Activated CD8-positive, alpha-beta memory T cell treated with anti-CD3 and anti-CD28 coated beads, Interleukin-2, amount 10 ng/mL, durations not matched to agents 7 days and 5 days (primary cell): ENCODE measurements at regions of chr9 and their contacts with region 1.

Region 1: GRCh38 chr9:90914868-90915483 is 113.4 kb downstream of the SYK start:
- DNase-seq: peak; percentile 83
- ATAC-seq: peak; percentile 94
- H3K4me3 Mint-ChIP-seq: no peak overlapping the region
- H3K27ac Mint-ChIP-seq: no peak overlapping the region
- H3K4me1 Mint-ChIP-seq: peaks cover 7% of the 10 kb centered on the region
- H3K27me3 Mint-ChIP-seq: no peaks in the 10 kb centered on the region

Region 2: GRCh38 chr9:90929626-90930025 is 14.7 kb after region 1 on chr9:
- CTCF ChIA-PET with region 1: interaction called, 15 read pairs
- DNase-seq: no peak
- ATAC-seq: no peak
- H3K4me3 Mint-ChIP-seq: no peak overlapping the region
- H3K27ac Mint-ChIP-seq: no peak overlapping the region
- H3K4me1 Mint-ChIP-seq: peaks cover 5% of the 10 kb centered on the region
- H3K27me3 Mint-ChIP-seq: peaks cover 20% of the 10 kb centered on the region

Region 3: DNA sequence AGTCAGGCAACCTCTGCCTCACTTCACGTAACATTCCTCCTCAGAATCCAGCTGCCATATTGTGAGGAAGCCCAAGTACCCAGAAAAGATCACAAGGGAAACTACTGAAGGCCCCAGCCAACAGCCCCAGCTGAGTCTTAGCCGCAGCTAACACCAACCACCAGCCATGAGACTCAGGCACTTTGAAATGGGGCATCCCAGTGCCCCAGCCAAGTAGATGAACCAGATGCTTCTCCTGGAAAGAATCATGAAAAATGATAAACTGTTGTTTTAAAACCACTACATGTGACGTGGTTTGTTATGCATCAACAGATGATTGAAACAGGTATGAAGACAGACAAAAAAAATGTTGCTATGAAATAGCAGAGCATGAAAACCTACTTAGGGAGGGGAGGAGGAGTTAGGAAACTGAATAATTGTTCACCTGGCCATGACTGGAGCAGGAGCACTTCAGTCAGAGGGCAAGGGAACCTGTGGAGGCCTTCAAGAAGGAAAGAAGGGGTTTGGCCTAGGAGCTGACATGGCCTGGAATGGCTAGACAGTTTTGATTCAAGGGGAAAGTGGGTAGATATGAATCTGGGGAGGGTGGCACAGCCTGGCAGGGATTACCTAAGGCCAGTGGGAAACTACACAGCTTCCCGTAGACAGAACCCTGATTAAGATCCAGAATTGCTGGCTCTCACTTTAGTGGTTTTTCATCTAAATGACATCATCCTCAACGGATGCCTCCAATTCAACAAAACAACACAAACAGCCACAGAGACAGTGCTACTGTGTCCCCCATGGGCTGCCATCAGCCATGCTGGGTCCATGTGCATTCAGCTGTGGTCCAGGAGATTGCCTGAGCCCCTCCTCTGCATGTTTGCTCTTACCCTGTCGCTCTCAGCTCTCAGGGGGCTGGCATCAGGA is 98.2 kb after region 1 on chr9:
- CTCF ChIA-PET with region 1: interaction called, 19 read pairs
- DNase-seq: peak; percentile 53
- ATAC-seq: peak; percentile 74
- H3K4me3 Mint-ChIP-seq: no peak overlapping the region
- H3K27ac Mint-ChIP-seq: peak overlapping the region; percentile 70
- H3K4me1 Mint-ChIP-seq: peaks cover 22% of the 10 kb centered on the region
- H3K27me3 Mint-ChIP-seq: peaks cover 3% of the 10 kb centered on the region

Region 4: GRCh38 chr9:91164724-91165520 is 249.9 kb after region 1 on chr9:
- CTCF ChIA-PET with region 1: interaction called, 12 read pairs
- DNase-seq: peak; percentile 96
- ATAC-seq: peak; percentile 69
- H3K4me3 Mint-ChIP-seq: peak overlapping the region; percentile 81
- H3K27ac Mint-ChIP-seq: peak overlapping the region; percentile 95
- H3K4me1 Mint-ChIP-seq: peaks cover 66% of the 10 kb centered on the region
- H3K27me3 Mint-ChIP-seq: no peaks in the 10 kb centered on the region

Region 5: DNA sequence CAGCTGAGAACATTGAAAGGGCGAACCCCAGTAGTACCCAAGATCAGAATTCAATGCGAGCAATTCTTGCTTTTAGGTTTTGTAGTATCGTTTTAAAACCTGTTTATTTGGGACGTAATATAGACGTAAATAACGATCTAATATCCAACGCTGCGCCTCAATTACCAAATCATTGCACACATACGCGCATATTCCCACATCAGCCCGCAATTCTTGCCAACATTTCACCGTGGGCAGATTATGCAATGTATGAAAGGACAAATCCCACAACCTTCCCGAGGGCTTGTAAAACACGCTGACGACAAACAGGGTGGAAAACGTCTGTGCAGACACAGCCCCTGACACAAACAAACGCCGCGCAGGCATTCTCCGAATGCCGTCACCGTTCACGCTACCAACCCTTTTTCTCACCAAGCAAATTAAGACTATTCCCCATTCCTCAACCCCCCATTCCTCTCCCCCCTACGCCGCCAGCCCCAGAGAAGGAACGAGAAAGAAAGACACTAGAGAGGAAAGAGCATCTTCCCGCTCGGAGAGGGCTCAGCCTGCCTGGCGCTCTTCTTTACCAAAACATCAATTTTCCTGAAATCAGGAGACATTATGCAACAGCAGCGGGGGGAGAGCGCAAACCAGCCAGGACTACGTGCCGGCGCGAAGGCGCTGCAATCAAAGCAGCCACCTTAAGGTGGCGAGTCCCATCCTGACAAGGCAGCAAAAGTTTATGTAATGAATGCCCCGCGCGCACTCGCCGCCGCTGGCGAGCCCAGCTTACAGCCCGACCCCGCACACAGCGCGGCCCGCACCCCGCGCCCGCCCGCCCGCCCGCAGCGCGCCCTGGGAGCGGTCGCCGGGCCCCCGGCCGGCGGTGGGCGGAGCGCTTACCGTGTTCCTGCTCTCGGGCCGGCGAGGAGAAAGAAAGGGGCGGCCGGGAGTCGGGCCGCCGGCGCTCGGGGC is 508.1 kb after region 1 on chr9:
- CTCF ChIA-PET with region 1: interaction called, 113 read pairs
- DNase-seq: peak; percentile 82
- ATAC-seq: peak; percentile 34
- H3K4me3 Mint-ChIP-seq: peak overlapping the region; percentile 86
- H3K27ac Mint-ChIP-seq: peak overlapping the region; percentile 95
- H3K4me1 Mint-ChIP-seq: peaks cover 57% of the 10 kb centered on the region
- H3K27me3 Mint-ChIP-seq: no peaks in the 10 kb centered on the region

Region 6: GRCh38 chr9:91727316-91727861 is 812.4 kb after region 1 on chr9:
- CTCF ChIA-PET with region 1: interaction called, 16 read pairs
- DNase-seq: peak; percentile 68
- ATAC-seq: peak; percentile 98
- H3K4me3 Mint-ChIP-seq: no peak overlapping the region
- H3K27ac Mint-ChIP-seq: peak overlapping the region; percentile 39
- H3K4me1 Mint-ChIP-seq: peaks cover 12% of the 10 kb centered on the region
- H3K27me3 Mint-ChIP-seq: peaks cover 5% of the 10 kb centered on the region